Right cardiac atrium (tissue), 5 donors: ENCODE measurements at regions of chr12 and their contacts with region 1.

Region 1: GRCh38 chr12:110896559-110896958 is 23.8 kb downstream of the MYL2 start:
- DNase-seq: no peak
- ATAC-seq: no peak
- H3K4me3 ChIP-seq: no peak overlapping the region
- H3K27ac ChIP-seq: no peak overlapping the region
- H3K4me1 ChIP-seq: no peaks in the 10 kb centered on the region
- H3K27me3 ChIP-seq: no peaks in the 10 kb centered on the region

Region 2: DNA sequence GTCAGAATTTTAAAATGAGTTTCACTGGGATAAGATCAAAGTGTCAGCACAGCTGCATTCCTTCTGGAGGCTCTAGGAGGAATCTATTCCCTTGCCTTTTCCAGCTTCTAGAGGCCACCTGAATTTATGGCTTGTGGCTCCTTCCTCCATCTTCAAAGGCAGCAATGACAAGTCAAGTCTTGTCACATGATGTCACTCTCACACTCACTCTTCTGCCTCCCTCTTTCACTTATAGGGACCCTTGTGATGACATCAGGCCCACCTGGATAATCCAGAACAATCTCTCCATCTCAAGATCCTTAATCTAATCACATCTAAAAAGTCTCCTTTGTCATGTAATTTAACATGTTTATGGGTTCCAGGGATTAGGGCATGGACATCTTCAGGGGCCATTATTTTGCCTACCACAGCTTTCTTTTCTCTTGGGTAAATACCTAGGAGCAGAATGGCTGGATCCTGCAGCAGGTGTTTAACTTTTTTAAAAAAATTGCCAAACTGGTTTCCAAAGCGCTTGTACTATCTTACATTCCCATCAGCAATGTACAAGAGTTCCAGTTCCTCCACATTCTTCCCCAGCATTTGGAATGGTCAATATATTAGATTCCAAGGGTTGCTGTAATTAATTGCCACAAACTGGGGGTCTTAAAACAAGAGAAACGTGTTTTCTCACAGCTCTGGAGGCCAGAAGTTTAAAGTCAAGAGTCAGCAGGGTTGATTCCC is 51.3 kb after region 1 on chr12:
- intact Hi-C with region 1: no loop called
- DNase-seq: no peak
- ATAC-seq: no peak
- H3K4me3 ChIP-seq: no peak overlapping the region
- H3K27ac ChIP-seq: no peak overlapping the region
- H3K4me1 ChIP-seq: no peaks in the 10 kb centered on the region
- H3K27me3 ChIP-seq: no peaks in the 10 kb centered on the region

Region 3: DNA sequence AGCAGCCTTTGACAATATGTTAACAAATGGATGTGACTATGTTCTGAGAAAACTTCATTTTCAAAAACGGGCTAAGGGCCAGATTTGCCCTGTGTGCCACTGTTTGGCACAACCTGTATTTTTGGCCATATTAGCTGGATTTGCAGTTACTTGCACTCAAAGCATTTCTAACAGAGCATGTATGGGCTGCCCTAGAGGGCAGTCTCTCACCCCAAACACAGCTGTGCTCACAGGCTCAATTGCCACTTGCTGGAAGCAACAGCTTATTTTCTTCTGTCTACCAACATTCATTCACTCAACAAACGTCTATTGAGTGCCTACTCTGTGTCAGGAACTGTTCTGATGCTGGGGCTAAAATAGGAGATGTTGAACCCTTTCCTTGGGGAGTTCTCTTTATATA is 62.5 kb after region 1 on chr12:
- intact Hi-C with region 1: no loop called
- DNase-seq: no peak
- ATAC-seq: no peak
- H3K4me3 ChIP-seq: no peak overlapping the region
- H3K27ac ChIP-seq: no peak overlapping the region
- H3K4me1 ChIP-seq: no peaks in the 10 kb centered on the region
- H3K27me3 ChIP-seq: no peaks in the 10 kb centered on the region

Region 4: DNA sequence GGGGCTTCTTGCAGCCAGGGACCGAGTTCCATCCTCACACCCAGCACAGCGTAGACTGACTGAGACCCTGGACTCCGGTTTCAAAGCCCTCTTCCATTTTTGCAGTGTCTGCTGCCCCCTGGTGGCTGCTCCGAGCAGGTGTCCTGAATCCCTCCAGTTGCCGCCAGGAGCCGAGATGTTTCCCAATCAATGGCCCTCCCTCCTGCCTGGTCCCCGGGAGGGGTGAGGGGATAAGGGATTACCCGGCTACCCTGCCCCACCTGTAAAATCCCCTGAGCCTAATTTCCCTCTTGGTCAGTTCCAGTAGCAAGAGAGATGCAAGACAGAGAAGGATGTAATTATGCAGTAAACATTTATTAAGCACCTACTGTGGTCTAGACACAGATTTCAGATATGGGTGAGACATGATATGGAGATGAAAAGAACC is 417.3 kb after region 1 on chr12:
- intact Hi-C with region 1: loop called in 2 of 4 experiments (anchors 5 kb)
- DNase-seq: peak; percentile 73 to 87 (median 84)
- ATAC-seq: peak; percentile 54 to 70
- H3K4me3 ChIP-seq: no peak overlapping the region
- H3K27ac ChIP-seq: no peak overlapping the region
- H3K4me1 ChIP-seq: no peaks in the 10 kb centered on the region
- H3K27me3 ChIP-seq: no peaks in the 10 kb centered on the region